ENCODE measurements at regions of chr15 and their contacts with region 1.

Region 1: GRCh38 chr15:73908030-73908821 is 18.0 kb upstream of the LOXL1 start:
- DNase-seq: peak; percentile 86
- H3K4me3 Mint-ChIP-seq: no peak overlapping the region
- H3K27ac Mint-ChIP-seq: no peak overlapping the region
- H3K4me1 Mint-ChIP-seq: peaks cover 14% of the 10 kb centered on the region
- H3K27me3 Mint-ChIP-seq: peaks cover 7% of the 10 kb centered on the region

Region 2: DNA sequence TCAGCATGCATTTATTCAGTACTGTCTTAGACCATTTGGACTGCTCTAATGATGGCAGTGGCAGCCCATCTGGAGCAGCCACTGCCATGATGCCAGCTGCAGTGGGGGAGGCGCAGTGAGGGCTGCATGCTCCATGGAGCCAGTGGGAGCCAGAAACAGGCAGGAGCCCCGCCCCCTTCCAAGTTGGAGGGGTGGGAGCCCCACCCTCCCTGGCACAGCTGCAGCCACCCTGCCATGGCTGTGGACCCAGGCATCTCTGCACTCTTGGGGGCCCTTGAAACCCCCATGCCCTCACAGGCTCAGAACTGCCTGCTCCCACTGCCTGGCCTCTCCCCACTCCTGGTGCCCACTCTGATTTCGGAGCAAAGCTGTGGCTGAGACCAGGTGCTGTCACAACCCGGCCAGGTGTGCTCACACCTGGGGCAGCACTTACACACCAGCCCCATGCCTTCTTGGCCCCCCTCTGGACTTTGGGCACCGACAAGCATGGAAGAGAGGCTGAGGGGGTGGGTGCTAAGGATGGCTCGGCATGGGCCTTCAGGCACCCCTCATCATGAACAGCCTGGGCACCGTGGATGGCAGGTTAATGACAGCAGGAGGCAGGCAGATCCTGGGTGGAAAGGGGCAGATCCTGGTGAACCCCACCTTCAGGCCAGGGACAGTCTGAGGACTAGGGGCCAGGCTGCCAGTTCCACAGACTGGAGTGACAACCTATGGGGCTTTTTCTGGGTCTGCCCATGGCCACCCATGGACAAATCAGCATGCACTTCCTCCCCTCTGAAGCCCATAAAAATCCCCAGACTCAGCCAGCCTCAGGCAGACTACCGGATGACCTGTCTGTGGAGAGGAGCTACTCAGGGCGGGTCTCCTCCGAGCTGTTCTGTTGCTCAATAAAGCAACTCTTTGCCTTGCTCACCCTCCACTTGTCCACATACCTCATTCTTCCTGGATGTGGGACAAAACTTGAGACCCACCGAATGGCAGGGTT is 16.6 kb before region 1 on chr15:
- CTCF ChIA-PET with region 1: interaction called, 54 read pairs
- DNase-seq: no peak
- H3K4me3 Mint-ChIP-seq: no peak overlapping the region
- H3K27ac Mint-ChIP-seq: no peak overlapping the region
- H3K4me1 Mint-ChIP-seq: no peaks in the 10 kb centered on the region
- H3K27me3 Mint-ChIP-seq: peaks cover 47% of the 10 kb centered on the region

Region 3: DNA sequence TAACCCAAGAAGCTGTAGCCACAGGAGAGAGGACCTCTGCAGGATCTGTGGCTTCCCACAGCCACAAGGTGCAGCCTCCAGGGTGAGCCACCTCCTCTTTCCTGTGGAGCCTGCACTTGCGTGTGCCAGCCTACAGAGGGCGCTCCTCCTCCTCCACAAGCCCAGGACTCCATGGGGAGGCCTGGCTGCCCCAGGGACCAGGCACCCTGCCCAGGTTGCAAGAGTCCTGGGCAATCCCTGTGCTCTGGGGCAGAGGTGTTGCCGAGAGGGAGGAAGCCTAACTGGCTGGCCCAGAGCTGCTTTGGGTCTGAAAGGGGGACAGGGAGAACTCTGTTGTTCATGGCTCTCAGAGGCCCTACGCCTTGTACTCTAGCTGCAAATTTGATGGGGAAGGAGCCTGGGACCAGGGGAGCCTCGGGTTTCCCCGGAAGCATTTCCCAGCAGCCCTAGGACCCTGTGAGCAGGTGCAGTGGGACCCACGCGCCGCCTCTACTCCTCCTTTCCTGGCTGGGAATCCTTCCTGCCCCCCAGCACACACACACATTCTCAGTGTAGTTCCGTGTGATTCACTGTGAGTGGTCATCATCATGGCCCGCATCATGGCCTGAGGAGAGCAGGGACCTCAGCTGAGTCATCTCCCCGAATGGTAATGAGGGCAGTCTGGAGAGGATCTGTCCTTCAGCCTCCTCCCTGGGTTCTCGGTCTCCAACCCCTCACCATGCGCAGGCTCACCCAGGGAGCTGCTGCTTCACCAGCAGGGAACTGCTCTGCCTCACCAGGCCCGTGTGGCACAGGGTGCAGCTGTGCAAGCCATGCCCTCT is 10.6 kb before region 1 on chr15:
- CTCF ChIA-PET with region 1: interaction called, 54 read pairs
- DNase-seq: peak; percentile 77
- H3K4me3 Mint-ChIP-seq: no peak overlapping the region
- H3K27ac Mint-ChIP-seq: no peak overlapping the region
- H3K4me1 Mint-ChIP-seq: peaks cover 4% of the 10 kb centered on the region
- H3K27me3 Mint-ChIP-seq: peaks cover 20% of the 10 kb centered on the region

Region 4: GRCh38 chr15:73941871-73942635 is 33.8 kb after region 1 on chr15:
- CTCF ChIA-PET with region 1: no interaction called
- DNase-seq: peak; percentile 40
- H3K4me3 Mint-ChIP-seq: no peak overlapping the region
- H3K27ac Mint-ChIP-seq: peak overlapping the region; percentile 52
- H3K4me1 Mint-ChIP-seq: peaks cover 20% of the 10 kb centered on the region
- H3K27me3 Mint-ChIP-seq: peaks cover 45% of the 10 kb centered on the region